HepG2 (cell line): ENCODE measurements at regions of chr20 and their contacts with region 1.

Region 1: GRCh38 chr20:13336308-13337089 is 115.4 kb downstream of the ISM1 start:
- DNase-seq: peak; percentile 87
- ATAC-seq: peak; percentile 89
- H3K4me3 ChIP-seq: no peak overlapping the region; a peak in 1 of 6 replicates
- H3K27ac ChIP-seq: peak overlapping the region; percentile 52
- H3K4me1 ChIP-seq: peaks cover 87% of the 10 kb centered on the region
- H3K27me3 ChIP-seq: no peaks in the 10 kb centered on the region
- CTCF ChIP-seq: no peak
- EP300 ChIP-seq: no peak; a peak in 1 of 4 replicates
- POLR2A ChIP-seq: no peak
- RAD21 ChIP-seq: no peak

Region 2: DNA sequence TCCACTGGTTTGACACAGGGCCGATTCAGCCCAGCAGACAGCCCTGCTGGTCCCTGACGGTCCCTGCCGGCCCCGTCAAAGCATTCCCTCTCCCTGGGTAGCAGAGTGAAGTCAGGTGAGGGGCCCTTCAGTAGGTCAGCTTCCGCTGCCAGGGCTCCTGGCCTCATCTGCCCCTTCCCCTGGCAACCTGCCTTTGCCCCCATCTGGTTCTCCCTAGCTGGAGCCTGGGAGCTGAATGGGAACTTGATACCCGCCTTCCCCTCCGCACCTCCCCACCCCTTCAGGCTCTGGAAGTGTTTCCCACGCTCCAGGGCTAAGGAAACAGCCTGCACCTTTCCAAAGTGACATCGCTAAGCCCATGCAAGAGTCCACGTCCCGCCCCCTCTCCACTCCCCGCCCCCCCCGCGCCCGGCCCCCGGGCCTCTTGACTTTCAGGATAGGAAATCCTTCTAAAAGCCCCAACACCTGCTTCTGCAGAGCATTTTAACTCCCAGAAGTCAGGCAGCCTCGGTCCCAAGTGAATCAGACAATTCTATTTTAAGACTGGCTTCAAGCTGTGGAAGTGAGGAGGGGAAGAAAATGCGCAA is 62.1 kb before region 1 on chr20:
- CTCF ChIA-PET with region 1: no interaction called
- POLR2A ChIA-PET with region 1: no interaction called
- in situ Hi-C with region 1: no loop called
- intact Hi-C with region 1: no loop called
- DNase-seq: no peak
- ATAC-seq: peak; percentile 35; the same call in 2 of the 3 replicates
- H3K4me3 ChIP-seq: no peak overlapping the region
- H3K27ac ChIP-seq: no peak overlapping the region
- H3K4me1 ChIP-seq: no peaks in the 10 kb centered on the region
- H3K27me3 ChIP-seq: no peaks in the 10 kb centered on the region
- CTCF ChIP-seq: no peak
- EP300 ChIP-seq: no peak
- POLR2A ChIP-seq: no peak
- RAD21 ChIP-seq: no peak

Region 3: DNA sequence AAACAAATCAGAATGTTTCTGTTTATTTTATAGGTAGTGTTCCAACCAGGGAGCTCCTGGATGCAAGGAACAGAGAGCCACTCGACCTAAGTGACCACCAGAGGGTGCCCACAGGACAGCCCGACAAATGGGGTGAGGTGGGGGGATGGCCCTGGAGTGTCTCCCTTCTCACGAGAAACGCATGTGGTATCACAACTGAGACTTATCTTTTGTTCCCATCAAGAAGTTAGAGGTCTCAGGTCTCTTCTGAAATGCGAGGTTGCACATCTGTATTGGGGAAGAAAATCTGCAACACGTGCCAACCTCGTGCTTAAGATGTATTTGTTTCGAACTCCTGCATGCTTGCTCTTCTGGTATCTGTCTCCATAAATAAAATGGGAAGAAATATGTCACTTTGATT is 11.5 kb before region 1 on chr20:
- CTCF ChIA-PET with region 1: no interaction called
- POLR2A ChIA-PET with region 1: no interaction called
- in situ Hi-C with region 1: no loop called
- intact Hi-C with region 1: loop called (anchors 1 kb)
- DNase-seq: peak; percentile 74
- ATAC-seq: peak; percentile 99
- H3K4me3 ChIP-seq: no peak overlapping the region
- H3K27ac ChIP-seq: no peak overlapping the region
- H3K4me1 ChIP-seq: peaks cover 29% of the 10 kb centered on the region
- H3K27me3 ChIP-seq: no peaks in the 10 kb centered on the region
- CTCF ChIP-seq: peak; percentile 98
- EP300 ChIP-seq: no peak
- POLR2A ChIP-seq: no peak
- RAD21 ChIP-seq: peak; percentile 99

Region 4: DNA sequence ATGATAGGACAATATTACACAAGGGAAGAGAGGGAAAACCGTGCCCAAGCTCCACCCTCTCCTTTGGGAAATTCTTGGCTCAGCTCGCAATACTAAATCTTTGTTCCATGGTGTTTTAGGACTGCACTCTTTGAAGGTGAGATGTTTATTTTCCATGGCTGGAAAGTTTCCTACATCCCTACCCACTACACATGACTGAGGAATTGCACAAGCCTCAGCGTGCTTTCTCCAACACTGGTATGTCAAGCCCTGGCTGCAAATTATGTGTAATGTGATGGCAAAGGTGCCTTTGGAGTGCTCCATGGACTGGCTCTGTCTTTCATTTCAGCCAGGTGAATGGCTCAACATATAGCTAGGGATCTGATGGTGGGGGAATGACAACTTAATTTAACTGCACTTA is 18.9 kb after region 1 on chr20:
- CTCF ChIA-PET with region 1: no interaction called
- POLR2A ChIA-PET with region 1: interaction called, 4 read pairs
- in situ Hi-C with region 1: no loop called
- intact Hi-C with region 1: loop called (anchors 2 kb)
- DNase-seq: peak; percentile 77
- ATAC-seq: peak; percentile 85
- H3K4me3 ChIP-seq: no peak overlapping the region
- H3K27ac ChIP-seq: no peak overlapping the region
- H3K4me1 ChIP-seq: peaks cover 24% of the 10 kb centered on the region
- H3K27me3 ChIP-seq: no peaks in the 10 kb centered on the region
- CTCF ChIP-seq: no peak
- EP300 ChIP-seq: 0 out of 4 replicates have a peak, but pooled peaks of 1 of the 2 experiments have one; percentile 5
- POLR2A ChIP-seq: no peak
- RAD21 ChIP-seq: no peak

Region 5: GRCh38 chr20:13425381-13426135 is 89.1 kb after region 1 on chr20:
- CTCF ChIA-PET with region 1: no interaction called
- POLR2A ChIA-PET with region 1: interaction called, 3 read pairs
- in situ Hi-C with region 1: loop called (anchors 5 kb)
- intact Hi-C with region 1: loop called (anchors 2 kb)
- DNase-seq: no peak
- ATAC-seq: no peak
- H3K4me3 ChIP-seq: no peak overlapping the region
- H3K27ac ChIP-seq: peak overlapping the region; percentile 82
- H3K4me1 ChIP-seq: peaks cover 66% of the 10 kb centered on the region
- H3K27me3 ChIP-seq: no peaks in the 10 kb centered on the region
- CTCF ChIP-seq: no peak
- EP300 ChIP-seq: no peak
- POLR2A ChIP-seq: no peak
- RAD21 ChIP-seq: no peak

Region 6: GRCh38 chr20:13684566-13685222 is 348.2 kb after region 1 on chr20:
- CTCF ChIA-PET with region 1: no interaction called
- POLR2A ChIA-PET with region 1: no interaction called
- in situ Hi-C with region 1: no loop called
- intact Hi-C with region 1: loop called (anchors 10 kb)
- DNase-seq: no peak
- ATAC-seq: no peak
- H3K4me3 ChIP-seq: no peak overlapping the region
- H3K27ac ChIP-seq: no peak overlapping the region
- H3K4me1 ChIP-seq: peaks cover 30% of the 10 kb centered on the region
- H3K27me3 ChIP-seq: no peaks in the 10 kb centered on the region
- CTCF ChIP-seq: no peak
- EP300 ChIP-seq: no peak
- POLR2A ChIP-seq: no peak
- RAD21 ChIP-seq: no peak